ENCODE measurements at regions of chrX and their contacts with region 1.

Region 1: DNA sequence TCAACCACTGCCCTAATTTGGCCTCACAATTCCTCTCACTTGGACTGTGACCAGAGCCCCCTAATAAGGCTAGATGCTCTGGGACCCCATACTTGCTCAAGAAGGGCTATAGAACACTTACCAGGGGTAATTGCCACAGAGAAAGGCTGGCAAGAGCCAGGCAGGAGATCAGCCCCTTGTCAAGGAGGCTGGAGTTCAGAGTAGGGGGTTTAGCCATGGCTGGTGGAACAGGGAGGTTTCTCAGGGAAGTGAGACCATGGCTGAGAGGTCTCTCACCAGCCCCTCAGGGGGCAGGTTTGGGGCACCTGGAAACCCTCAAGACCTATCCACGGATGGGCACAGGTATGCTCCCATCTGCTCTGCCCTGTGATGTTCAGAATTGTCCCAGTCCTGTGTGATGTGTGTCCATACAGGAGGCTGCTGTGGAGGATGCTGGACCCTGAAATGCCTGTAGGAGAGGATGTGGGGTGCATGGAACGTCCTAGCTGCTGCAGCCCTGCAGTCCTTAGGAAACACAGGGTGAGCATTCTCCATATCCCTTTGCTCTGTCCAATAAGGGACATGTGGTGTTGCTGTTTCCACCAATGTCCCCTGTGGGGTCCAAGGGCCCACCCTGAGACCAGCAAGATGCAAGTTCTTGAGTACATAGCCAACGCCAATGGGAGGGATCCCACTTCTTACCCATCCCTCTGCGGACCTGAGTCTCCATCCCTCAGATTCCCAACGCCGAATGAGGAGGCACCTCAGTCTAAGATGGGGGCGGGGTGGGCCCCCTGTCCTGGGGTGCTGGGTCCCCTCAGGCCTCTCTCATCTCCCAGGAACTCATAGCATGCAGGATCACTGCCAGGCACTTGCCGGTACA is 16.4 kb upstream of the HSFX1 start:
- DNase-seq: no peak
- ATAC-seq: no peak
- H3K4me3 ChIP-seq: no peak overlapping the region
- H3K27ac ChIP-seq: no peak overlapping the region
- H3K4me1 ChIP-seq: no peaks in the 10 kb centered on the region
- H3K27me3 ChIP-seq: no peaks in the 10 kb centered on the region
- CTCF ChIP-seq: no peak
- EP300 ChIP-seq: no peak
- POLR2A ChIP-seq: no peak
- RAD21 ChIP-seq: no peak

Region 2: DNA sequence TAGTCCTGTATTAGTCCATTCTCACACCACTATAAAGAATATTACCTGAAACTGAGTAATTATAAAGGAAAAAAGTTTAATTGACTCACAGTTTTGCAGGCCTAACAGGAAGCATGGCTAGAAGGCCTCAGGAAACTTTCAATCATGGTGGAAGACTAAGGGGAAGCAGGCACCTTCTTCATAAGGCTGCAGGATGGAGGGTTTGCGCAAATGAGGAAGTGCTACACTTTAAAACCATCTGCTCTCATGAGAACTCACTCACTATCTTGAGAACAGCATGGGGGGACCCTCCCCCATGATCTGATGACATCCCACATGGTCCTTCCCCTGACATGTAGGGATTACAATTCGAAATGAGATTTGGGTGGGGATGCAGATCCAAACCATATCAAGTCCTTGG is 57.7 kb before region 1 on chrX:
- CTCF ChIA-PET with region 1: no interaction called
- POLR2A ChIA-PET with region 1: no interaction called
- RAD21 ChIA-PET with region 1: no interaction called
- SMC1A ChIA-PET with region 1: no interaction called
- in situ Hi-C with region 1: no loop called
- intact Hi-C with region 1: loop called (anchors 10 kb)
- DNase-seq: no peak
- ATAC-seq: no peak
- H3K4me3 ChIP-seq: no peak overlapping the region
- H3K27ac ChIP-seq: no peak overlapping the region
- H3K4me1 ChIP-seq: no peaks in the 10 kb centered on the region
- H3K27me3 ChIP-seq: no peaks in the 10 kb centered on the region
- CTCF ChIP-seq: no peak
- EP300 ChIP-seq: no peak
- POLR2A ChIP-seq: no peak
- RAD21 ChIP-seq: no peak

Region 3: DNA sequence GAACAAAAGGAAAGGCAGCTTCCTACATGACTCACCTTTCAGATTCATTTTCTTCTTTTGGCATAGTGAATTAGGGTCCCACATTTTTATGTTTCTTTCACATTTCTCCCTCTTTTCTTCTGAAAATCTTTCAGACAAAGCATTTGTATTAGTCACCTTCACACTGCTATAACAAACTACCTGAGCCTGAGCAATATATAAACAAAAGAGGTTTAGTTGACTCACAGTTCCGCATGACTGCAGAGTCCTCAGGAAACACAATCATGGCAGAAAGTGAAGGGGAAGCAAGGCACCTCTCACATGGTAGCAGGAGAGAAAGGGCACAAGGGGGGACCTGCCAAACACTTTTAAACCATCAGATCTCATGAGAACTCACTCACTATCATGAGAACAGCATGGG is 61.2 kb after region 1 on chrX:
- CTCF ChIA-PET with region 1: no interaction called
- POLR2A ChIA-PET with region 1: no interaction called
- RAD21 ChIA-PET with region 1: no interaction called
- SMC1A ChIA-PET with region 1: no interaction called
- in situ Hi-C with region 1: no loop called
- intact Hi-C with region 1: loop called (anchors 10 kb)
- DNase-seq: no peak
- ATAC-seq: no peak
- H3K4me3 ChIP-seq: no peak overlapping the region
- H3K27ac ChIP-seq: no peak overlapping the region
- H3K4me1 ChIP-seq: no peaks in the 10 kb centered on the region
- H3K27me3 ChIP-seq: no peaks in the 10 kb centered on the region
- CTCF ChIP-seq: no peak
- EP300 ChIP-seq: no peak
- POLR2A ChIP-seq: no peak
- RAD21 ChIP-seq: no peak

Region 4: DNA sequence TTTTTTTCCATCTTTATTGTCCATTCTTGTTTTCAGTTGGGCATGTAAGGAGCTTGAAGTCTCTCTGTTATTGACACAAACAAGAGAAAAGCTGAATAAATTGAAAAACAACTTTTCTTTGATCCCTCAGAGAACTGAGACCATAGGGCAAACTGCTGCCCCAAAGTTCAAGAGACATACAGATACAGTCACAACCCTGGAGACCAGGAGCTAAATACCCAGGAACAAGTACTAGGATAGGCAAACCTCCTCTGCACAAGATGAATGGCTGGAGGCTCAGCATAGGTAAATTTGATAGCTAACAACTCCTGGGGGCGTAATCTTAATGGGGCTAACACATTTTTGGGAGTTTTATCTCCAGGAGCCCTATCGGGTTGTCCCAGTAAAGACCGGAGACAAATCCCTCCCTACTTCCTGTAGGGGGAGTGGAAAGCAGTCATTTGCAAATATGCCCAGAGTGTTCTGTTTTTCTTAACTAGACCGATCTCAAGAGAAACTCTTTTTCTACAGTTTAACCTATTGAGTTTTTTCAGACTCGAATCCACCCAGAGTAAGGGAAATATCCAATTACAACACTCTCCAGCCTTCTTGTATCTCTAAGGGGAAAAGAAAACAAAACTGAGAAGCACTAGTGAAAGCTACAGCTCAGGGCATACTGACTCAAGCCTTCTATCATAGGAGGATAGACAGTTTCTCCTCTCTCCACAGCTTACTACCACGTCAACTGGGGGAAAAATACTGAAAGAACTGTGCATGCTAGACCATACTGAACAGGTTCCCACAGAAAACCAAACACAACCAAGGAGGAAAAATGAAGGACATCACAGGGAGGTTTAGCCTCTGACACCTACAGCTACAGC is 146.7 kb after region 1 on chrX:
- CTCF ChIA-PET with region 1: no interaction called
- POLR2A ChIA-PET with region 1: no interaction called
- RAD21 ChIA-PET with region 1: no interaction called
- SMC1A ChIA-PET with region 1: no interaction called
- in situ Hi-C with region 1: no loop called
- intact Hi-C with region 1: no loop called
- DNase-seq: peak; percentile 13
- ATAC-seq: peak; percentile 85
- H3K4me3 ChIP-seq: no peak overlapping the region
- H3K27ac ChIP-seq: peak overlapping the region; percentile 42; the same call in 1 of the 2 replicates
- H3K4me1 ChIP-seq: peaks cover 7% of the 10 kb centered on the region
- H3K27me3 ChIP-seq: no peaks in the 10 kb centered on the region
- CTCF ChIP-seq: no peak
- EP300 ChIP-seq: no peak
- POLR2A ChIP-seq: no peak
- RAD21 ChIP-seq: no peak

Region 5: DNA sequence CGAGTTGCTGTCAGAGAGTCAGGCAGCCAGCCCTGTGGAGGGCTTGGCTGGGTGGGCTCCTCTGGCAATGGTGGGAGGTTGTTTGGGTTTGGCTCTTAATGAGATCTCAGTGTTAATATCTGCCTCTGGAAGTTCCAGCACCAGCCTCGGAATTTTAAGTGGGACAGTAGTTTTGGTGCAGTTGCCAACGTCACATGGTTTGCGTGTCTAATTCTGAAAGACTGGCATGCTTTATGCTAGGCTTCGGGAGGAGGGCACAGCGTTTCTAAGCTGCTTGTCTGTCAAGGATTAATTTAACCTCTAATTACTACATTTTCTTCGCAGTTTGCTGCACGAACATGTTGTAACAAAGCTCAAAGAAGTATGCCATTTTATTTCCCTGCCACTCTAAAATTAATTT is 614.8 kb after region 1 on chrX:
- CTCF ChIA-PET with region 1: no interaction called
- POLR2A ChIA-PET with region 1: no interaction called
- RAD21 ChIA-PET with region 1: no interaction called
- SMC1A ChIA-PET with region 1: no interaction called
- in situ Hi-C with region 1: no loop called
- intact Hi-C with region 1: no loop called
- DNase-seq: no peak
- ATAC-seq: no peak
- H3K4me3 ChIP-seq: no peak overlapping the region
- H3K27ac ChIP-seq: no peak overlapping the region
- H3K4me1 ChIP-seq: no peaks in the 10 kb centered on the region
- H3K27me3 ChIP-seq: no peaks in the 10 kb centered on the region; a peak in 1 of 4 replicates
- CTCF ChIP-seq: no peak
- EP300 ChIP-seq: no peak
- POLR2A ChIP-seq: no peak
- RAD21 ChIP-seq: no peak